ENCODE measurements at regions of chr2 and their contacts with region 1.

Region 1: GRCh38 chr2:219057709-219058540 is 2.8 kb downstream of the IHH start:
- DNase-seq: peak; percentile 26
- ATAC-seq: peak; percentile 97
- H3K4me3 ChIP-seq: no peak overlapping the region
- H3K27ac ChIP-seq: no peak overlapping the region
- H3K4me1 ChIP-seq: no peaks in the 10 kb centered on the region
- H3K27me3 ChIP-seq: peaks cover 16% of the 10 kb centered on the region; the same call in 1 of the 2 replicates
- CTCF ChIP-seq: peak; percentile 83 to 92 (median 87)
- POLR2A ChIP-seq: no peak
- RAD21 ChIP-seq: peak; percentile 96

Region 2: GRCh38 chr2:219119422-219120043 is 61.6 kb after region 1 on chr2:
- CTCF ChIA-PET with region 1: interaction called, 19 read pairs
- POLR2A ChIA-PET with region 1: no interaction called
- RAD21 ChIA-PET with region 1: interaction called in 1 of 2 experiments, 9 read pairs
- intact Hi-C with region 1: loop called (anchors 1 kb)
- DNase-seq: peak; percentile 27
- ATAC-seq: peak; percentile 93
- H3K4me3 ChIP-seq: no peak overlapping the region
- H3K27ac ChIP-seq: no peak overlapping the region
- H3K4me1 ChIP-seq: peaks cover 7 to 8% of the 10 kb centered on the region in 2 experiments
- H3K27me3 ChIP-seq: no peaks in the 10 kb centered on the region; the same call in 1 of the 2 replicates
- CTCF ChIP-seq: peak; percentile 67 to 93 (median 90)
- POLR2A ChIP-seq: no peak
- RAD21 ChIP-seq: peak; percentile 91

Measured in HCT116 (cell line).